Activated CD4-positive, alpha-beta memory T cell treated with anti-CD3 and anti-CD28 coated beads for 36 hours (primary cell): ENCODE measurements at regions of chr19 and their contacts with region 1.

Region 1: GRCh38 chr19:44723952-44724319 is 24.6 kb upstream of the BCL3 start:
- DNase-seq: peak; percentile 88
- H3K4me3 Mint-ChIP-seq: no peak overlapping the region
- H3K27ac Mint-ChIP-seq: peak overlapping the region; percentile 10
- H3K4me1 Mint-ChIP-seq: peaks cover 35% of the 10 kb centered on the region
- H3K27me3 Mint-ChIP-seq: peaks cover 2% of the 10 kb centered on the region

Region 2: GRCh38 chr19:44345959-44346358 is 378.0 kb before region 1 on chr19:
- CTCF ChIA-PET with region 1: no interaction called
- POLR2A ChIA-PET with region 1: no interaction called
- intact Hi-C with region 1: no loop called
- DNase-seq: no peak
- H3K4me3 Mint-ChIP-seq: no peak overlapping the region
- H3K27ac Mint-ChIP-seq: no peak overlapping the region
- H3K4me1 Mint-ChIP-seq: no peaks in the 10 kb centered on the region
- H3K27me3 Mint-ChIP-seq: no peaks in the 10 kb centered on the region

Region 3: GRCh38 chr19:44689056-44689895 is 34.7 kb before region 1 on chr19:
- CTCF ChIA-PET with region 1: interaction called, 86 read pairs
- POLR2A ChIA-PET with region 1: no interaction called
- intact Hi-C with region 1: loop called (anchors 1 kb)
- DNase-seq: peak; percentile 81
- H3K4me3 Mint-ChIP-seq: no peak overlapping the region
- H3K27ac Mint-ChIP-seq: no peak overlapping the region
- H3K4me1 Mint-ChIP-seq: peaks cover 32% of the 10 kb centered on the region
- H3K27me3 Mint-ChIP-seq: peaks cover 10% of the 10 kb centered on the region

Region 4: GRCh38 chr19:44712864-44713515 is 10.9 kb before region 1 on chr19:
- CTCF ChIA-PET with region 1: interaction called, 32 read pairs
- POLR2A ChIA-PET with region 1: no interaction called
- intact Hi-C with region 1: no loop called
- DNase-seq: no peak
- H3K4me3 Mint-ChIP-seq: no peak overlapping the region
- H3K27ac Mint-ChIP-seq: no peak overlapping the region
- H3K4me1 Mint-ChIP-seq: no peaks in the 10 kb centered on the region
- H3K27me3 Mint-ChIP-seq: no peaks in the 10 kb centered on the region

Region 5: GRCh38 chr19:44752816-44753618 is 29.1 kb after region 1 on chr19:
- CTCF ChIA-PET with region 1: interaction called, 50 read pairs
- POLR2A ChIA-PET with region 1: interaction called, 7 read pairs
- intact Hi-C with region 1: loop called (anchors 2 kb)
- DNase-seq: peak; percentile 99
- H3K4me3 Mint-ChIP-seq: peak overlapping the region; percentile 93
- H3K27ac Mint-ChIP-seq: peak overlapping the region; percentile 99
- H3K4me1 Mint-ChIP-seq: peaks cover 52% of the 10 kb centered on the region
- H3K27me3 Mint-ChIP-seq: no peaks in the 10 kb centered on the region

Region 6: GRCh38 chr19:44845612-44846454 is 121.9 kb after region 1 on chr19 and contains the start of gene NECTIN2:
- CTCF ChIA-PET with region 1: interaction called, 14 read pairs
- POLR2A ChIA-PET with region 1: no interaction called
- intact Hi-C with region 1: loop called (anchors 2 kb)
- DNase-seq: peak; percentile 96
- H3K4me3 Mint-ChIP-seq: peak within 1 kb of the TSS; percentile 81
- H3K27ac Mint-ChIP-seq: peak within 1 kb of the TSS; percentile 24
- H3K4me1 Mint-ChIP-seq: peaks cover 26% of the 10 kb centered on the region
- H3K27me3 Mint-ChIP-seq: peaks cover 11% of the 10 kb centered on the region
- total RNA-seq, gene NECTIN2: 0.71 to 1.9 TPM

Region 7: DNA sequence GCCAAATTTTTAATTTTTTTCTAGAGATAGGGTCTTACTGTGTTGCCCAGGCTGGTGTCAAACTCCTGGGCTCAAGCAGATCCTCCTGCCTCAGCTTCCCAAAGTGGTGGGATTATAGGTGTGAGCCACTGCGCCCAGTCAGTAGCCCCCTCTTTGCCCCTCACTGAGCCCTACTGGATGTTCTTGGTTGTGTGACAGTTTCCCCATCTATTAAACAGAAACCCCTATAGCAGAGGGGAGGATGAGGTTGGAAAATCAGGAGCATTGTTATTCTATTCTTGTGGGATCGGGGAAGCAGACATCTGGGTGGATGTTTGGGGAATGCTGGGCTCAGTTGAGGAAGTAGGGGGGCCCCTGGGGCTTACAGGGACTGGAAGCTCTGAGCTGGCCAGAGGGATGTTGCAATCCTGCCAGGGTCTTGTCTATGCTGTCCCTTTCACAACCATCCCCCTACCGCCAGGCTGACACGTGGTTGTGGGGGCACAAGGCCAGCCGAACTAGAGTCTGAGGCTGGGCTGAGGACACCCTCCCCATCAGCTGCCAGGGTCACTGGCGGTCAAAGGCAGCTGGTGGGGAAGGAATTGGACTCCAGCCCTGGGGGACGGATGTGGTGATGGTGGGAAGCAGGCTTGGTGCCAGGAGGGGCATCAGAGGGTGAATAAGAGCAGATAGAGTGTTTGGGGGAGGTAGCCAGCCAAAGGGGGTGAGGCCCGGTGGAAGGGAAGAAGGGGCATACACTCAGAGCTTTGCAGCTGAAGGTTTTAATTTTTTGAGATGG is 201.4 kb after region 1 on chr19:
- CTCF ChIA-PET with region 1: no interaction called
- POLR2A ChIA-PET with region 1: no interaction called
- intact Hi-C with region 1: no loop called
- DNase-seq: no peak
- H3K4me3 Mint-ChIP-seq: no peak overlapping the region
- H3K27ac Mint-ChIP-seq: no peak overlapping the region
- H3K4me1 Mint-ChIP-seq: peaks cover 4% of the 10 kb centered on the region
- H3K27me3 Mint-ChIP-seq: peaks cover 17% of the 10 kb centered on the region

Region 8: GRCh38 chr19:45200568-45200994 is 476.6 kb after region 1 on chr19:
- CTCF ChIA-PET with region 1: no interaction called
- POLR2A ChIA-PET with region 1: no interaction called
- intact Hi-C with region 1: no loop called
- DNase-seq: no peak
- H3K4me3 Mint-ChIP-seq: no peak overlapping the region
- H3K27ac Mint-ChIP-seq: no peak overlapping the region
- H3K4me1 Mint-ChIP-seq: no peaks in the 10 kb centered on the region
- H3K27me3 Mint-ChIP-seq: no peaks in the 10 kb centered on the region

Region 9: DNA sequence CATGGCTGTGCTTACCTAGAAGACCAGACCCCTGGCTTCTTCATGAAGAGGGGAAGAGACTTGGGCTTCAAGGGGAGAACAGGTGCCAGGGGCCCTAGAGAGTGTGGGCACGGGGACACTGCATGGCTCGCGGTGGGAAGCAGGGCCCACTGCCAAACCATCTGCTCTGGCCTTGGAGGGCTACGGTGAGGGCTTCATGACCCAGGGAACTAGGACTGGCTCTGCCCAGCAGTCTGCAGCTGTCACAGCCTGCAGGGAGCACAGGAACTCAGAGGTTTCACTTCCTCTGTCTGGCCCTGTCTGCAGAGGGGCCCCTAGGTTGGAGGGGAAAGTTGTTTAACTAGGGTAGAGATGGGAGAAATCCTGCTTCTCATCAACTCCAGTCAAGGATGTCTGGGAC is 695.5 kb after region 1 on chr19:
- CTCF ChIA-PET with region 1: no interaction called
- POLR2A ChIA-PET with region 1: no interaction called
- intact Hi-C with region 1: no loop called
- DNase-seq: no peak
- H3K4me3 Mint-ChIP-seq: no peak overlapping the region
- H3K27ac Mint-ChIP-seq: peak overlapping the region; percentile 34
- H3K4me1 Mint-ChIP-seq: peaks cover 35% of the 10 kb centered on the region
- H3K27me3 Mint-ChIP-seq: no peaks in the 10 kb centered on the region